ENCODE measurements at regions of chr17 and their contacts with region 1.

Region 1: DNA sequence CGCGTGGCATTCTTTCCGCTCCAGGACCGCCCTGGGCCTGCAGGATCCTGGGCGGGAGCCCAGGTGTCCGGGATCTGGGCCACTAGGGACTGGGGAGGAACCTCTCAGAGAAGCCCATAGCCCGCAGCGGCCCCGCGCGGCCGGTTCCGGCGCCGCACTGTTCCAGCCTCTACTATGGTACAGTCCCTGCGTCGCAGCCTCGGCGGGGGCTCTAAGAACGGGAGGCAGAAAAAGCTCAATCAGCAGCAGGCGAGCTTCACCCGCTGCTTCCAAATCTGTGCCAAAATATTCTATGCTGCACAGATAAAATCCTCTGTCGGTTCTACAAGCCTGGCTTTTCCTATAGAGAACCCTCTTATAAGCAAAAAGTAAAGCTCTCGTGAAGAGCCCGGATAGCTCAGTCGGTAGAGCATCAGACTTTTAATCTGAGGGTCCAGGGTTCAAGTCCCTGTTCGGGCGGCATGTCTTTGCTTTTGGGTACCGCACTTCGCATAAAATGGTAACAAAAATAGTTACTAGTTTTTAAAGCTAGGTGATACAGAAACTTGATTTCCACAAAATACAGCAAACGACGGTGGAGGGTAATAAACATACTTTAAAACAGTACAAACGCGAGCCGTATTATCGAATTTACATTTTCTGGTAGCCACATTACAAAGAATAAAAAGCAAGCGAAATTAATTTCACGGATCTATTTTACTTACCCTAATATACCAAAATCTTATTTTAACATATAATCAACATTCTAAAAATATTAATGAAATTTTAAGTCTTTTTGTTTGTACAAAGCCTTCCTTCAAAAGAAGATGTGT is 661 bp upstream of the ALOXE3 start:
- DNase-seq: peak; percentile 86
- H3K4me3 ChIP-seq: peak overlapping the region; percentile 49 to 88 (median 79)
- H3K27ac ChIP-seq: peak overlapping the region; percentile 10
- H3K4me1 ChIP-seq: peaks cover 31% of the 10 kb centered on the region
- H3K27me3 ChIP-seq: peaks cover 30 to 32% of the 10 kb centered on the region in 2 experiments
- CTCF ChIP-seq: peak; percentile 90 to 93
- POLR2A ChIP-seq: no peak

Region 2: DNA sequence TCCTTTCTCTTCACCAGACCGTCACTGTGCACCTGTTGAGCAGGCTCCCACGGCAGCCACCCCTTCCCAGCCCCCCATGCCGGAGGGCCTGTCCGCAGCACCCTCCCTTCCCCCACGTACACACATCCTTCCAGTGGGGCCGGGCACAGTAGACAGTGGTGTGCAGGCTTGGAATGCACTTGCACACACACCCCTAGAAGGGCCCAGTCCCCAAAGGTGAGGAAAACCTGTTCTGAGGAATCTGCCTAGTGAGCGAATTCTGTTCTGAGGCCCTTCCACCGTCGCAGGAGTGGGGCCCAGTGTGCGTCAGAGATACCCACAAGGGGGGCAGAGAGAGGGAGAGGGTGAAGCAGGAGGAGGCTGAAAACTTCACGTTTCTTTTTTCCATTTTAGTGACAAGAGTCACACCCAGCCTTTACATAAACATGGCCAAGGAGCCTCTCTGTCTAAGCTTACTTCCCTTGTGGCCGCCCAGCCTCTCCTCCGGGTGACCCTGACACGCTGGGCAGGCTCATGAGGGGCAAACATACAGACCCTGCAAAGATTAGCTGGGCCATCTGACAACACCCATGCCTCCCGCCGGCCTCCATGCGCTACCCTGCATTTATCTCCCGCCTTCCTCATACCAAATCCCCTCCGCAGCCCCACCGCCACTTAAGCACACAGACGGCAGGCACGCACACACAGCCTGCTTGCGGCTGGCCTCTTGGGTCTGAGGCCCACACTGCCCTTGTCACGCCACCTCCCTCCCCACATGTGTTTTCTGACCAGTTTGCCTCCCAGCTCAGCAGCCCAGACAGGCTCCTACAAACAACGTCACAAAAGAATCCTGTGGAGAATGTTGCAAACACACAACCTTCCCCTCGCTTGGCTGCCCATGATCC is 641.3 kb before region 1 on chr17:
- CTCF ChIA-PET with region 1: no interaction called
- POLR2A ChIA-PET with region 1: no interaction called
- dilution Hi-C with region 1: no loop called
- intact Hi-C with region 1: no loop called
- DNase-seq: peak; percentile 29
- H3K4me3 ChIP-seq: peak overlapping the region in 2 of 3 experiments; percentile 71 to 91
- H3K27ac ChIP-seq: no peak overlapping the region
- H3K4me1 ChIP-seq: peaks cover 34% of the 10 kb centered on the region
- H3K27me3 ChIP-seq: no peaks in the 10 kb centered on the region
- CTCF ChIP-seq: no peak
- POLR2A ChIP-seq: no peak

Region 3: GRCh38 chr17:7887482-7888183 is 231.3 kb before region 1 on chr17:
- CTCF ChIA-PET with region 1: no interaction called
- POLR2A ChIA-PET with region 1: no interaction called
- dilution Hi-C with region 1: no loop called
- intact Hi-C with region 1: loop called (anchors 1 kb)
- DNase-seq: peak; percentile 100
- H3K4me3 ChIP-seq: peak overlapping the region in 2 of 3 experiments; percentile 50 to 76
- H3K27ac ChIP-seq: peak overlapping the region; percentile 94
- H3K4me1 ChIP-seq: peaks cover 42% of the 10 kb centered on the region
- H3K27me3 ChIP-seq: no peaks in the 10 kb centered on the region
- CTCF ChIP-seq: no peak
- POLR2A ChIP-seq: peak; percentile 74

Region 4: DNA sequence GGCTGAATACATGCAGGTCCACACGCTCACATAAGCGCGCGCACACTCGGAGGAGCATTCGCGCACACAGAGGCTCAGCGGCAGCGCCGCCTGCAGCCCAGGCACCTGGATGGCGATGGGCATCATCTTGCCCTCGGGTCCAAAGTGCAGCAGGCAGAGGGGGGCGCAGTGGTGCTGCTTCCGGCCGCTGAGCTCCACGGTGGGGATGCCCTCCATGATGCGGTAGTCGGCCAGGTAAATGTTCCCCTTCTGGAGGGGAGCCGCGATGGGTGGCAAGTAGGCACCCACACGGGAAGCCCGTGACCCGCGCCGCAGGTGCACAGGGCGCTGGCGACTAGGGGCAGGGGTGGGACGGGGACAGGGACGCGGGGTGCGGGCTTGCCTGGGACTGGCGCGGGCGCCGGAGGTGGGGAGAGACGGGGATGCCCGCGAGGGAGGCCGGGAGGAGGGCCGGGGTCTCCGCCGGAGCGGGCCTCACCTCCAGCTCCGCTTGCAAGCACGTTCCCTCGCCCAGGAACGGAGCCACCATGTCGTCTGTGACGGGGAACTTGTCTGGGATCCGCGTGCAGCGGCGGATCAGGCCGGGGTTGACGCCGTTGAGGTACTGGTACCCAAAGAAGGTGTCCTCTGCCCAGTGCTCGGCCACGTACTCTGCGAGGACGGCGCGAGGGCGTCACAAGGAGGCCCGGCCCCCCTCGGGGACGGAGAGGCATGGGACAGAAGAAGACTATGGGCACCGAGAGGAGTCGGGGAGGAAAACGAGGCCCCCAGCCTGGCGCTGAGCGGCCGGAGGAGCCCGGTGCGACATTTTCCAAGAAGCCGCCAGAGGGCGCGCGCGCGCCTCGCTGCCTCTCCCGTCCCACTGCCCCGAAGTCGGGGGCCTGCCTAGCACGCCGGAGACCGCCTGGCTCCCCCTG is 39.4 kb before region 1 on chr17:
- CTCF ChIA-PET with region 1: interaction called, 51 read pairs
- POLR2A ChIA-PET with region 1: no interaction called
- dilution Hi-C with region 1: no loop called
- intact Hi-C with region 1: loop called (anchors 1 kb)
- DNase-seq: peak; percentile 46
- H3K4me3 ChIP-seq: peak overlapping the region in 2 of 3 experiments; percentile 20 to 32
- H3K27ac ChIP-seq: no peak overlapping the region
- H3K4me1 ChIP-seq: peaks cover 6% of the 10 kb centered on the region
- H3K27me3 ChIP-seq: peaks cover 17 to 23% of the 10 kb centered on the region in 2 experiments
- CTCF ChIP-seq: peak; percentile 83 to 91
- POLR2A ChIP-seq: no peak

Region 5: DNA sequence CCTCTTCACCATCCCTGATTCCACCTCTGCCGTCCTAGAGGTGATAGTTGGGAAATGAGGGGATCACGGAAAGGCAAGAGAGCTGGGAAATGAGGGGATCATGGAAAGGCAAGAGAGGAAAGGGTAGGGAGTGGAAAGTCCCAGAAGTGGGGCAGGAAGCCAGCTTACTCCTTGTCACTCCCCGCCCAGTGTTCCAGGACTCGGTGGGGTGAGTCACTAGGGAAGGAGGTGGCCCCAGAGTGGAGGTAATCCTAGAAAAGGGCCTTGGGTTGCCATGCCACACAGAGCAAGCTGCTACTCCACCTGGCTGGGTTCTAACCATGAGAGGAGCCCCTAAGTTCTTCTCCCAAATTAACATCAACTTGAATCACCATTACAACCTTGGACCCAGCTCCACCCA is 15.4 kb before region 1 on chr17:
- CTCF ChIA-PET with region 1: interaction called, 11 read pairs
- POLR2A ChIA-PET with region 1: no interaction called
- dilution Hi-C with region 1: no loop called
- intact Hi-C with region 1: no loop called
- DNase-seq: no peak
- H3K4me3 ChIP-seq: no peak overlapping the region
- H3K27ac ChIP-seq: no peak overlapping the region
- H3K4me1 ChIP-seq: no peaks in the 10 kb centered on the region
- H3K27me3 ChIP-seq: peaks cover 0 to 6% of the 10 kb centered on the region in 2 experiments
- CTCF ChIP-seq: no peak
- POLR2A ChIP-seq: no peak

Region 6: DNA sequence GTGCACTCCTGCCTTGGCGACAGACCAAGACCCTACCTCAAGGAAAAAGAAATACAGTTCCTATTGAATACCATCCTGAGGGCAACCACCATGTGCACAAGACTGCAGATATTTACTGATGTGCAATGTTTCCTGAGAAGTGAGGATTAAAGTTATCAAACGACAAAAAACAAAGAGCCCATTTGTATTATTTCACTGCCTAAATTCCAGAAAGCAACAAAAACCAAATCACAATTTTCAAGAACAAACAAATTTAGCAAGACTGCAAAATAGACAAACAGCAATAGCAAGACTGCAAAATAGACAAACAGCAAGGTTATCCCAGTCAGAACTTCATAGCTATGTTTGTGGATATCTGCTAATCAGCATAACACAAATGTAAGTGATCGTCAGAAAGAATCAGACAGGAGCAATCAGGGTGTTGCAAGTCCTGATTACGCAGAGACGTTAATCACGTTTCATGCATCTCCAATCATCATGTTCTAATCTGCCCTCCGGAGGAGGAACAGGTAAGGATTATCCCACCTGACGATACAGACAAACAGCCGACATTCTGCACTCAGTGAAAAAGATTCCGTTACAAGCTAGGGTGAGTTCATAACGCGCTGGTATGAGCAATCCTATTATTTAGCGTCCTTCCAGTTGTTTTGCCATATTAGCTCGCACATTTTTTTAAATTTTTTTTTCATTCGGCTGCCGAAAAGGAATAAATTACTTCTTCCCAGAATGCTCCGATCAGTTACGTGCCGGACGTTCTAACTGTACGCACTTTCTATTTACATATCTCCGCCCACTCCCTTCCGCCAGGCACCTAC is 54.3 kb after region 1 on chr17:
- CTCF ChIA-PET with region 1: interaction called, 5 read pairs
- POLR2A ChIA-PET with region 1: interaction called, 16 read pairs
- dilution Hi-C with region 1: no loop called
- intact Hi-C with region 1: no loop called
- DNase-seq: peak; percentile 95
- H3K4me3 ChIP-seq: peak overlapping the region in 2 of 3 experiments; percentile 37 to 68
- H3K27ac ChIP-seq: peak overlapping the region; percentile 95
- H3K4me1 ChIP-seq: peaks cover 23% of the 10 kb centered on the region
- H3K27me3 ChIP-seq: no peaks in the 10 kb centered on the region
- CTCF ChIP-seq: no peak
- POLR2A ChIP-seq: peak; percentile 100

Region 7: DNA sequence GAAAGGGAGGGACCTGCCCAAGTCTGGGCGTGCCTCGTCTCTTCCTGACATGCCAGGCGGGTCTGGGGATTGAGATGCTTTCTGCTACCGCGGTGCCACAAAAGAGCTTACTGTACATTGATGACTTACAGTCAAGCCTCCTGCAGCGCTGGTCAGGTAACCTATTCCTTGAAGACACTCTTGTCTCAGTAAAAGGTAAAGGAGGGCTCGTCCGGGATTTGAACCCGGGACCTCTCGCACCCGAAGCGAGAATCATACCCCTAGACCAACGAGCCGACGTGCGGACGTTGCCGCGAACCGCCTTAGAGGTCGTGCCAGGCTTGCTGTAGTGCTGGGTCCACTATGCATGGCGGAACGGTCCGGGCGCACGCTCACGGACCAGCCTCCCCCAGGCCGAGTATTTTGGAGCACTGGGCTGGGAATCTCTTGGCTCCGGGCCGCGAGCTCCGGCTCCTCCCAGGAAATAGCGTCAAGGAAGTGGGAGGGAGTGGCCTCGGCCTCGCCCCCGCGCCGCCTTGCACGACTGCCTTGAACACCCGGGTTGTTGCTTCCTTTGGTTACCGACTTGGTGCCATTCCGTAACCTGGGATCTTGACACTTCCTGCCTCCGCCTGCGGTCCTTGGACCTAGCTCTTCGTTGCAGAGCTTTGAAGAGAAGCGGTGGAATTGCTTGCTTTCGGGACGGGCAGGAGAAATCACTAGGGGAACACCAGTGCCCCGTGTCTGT is 103.8 kb after region 1 on chr17:
- CTCF ChIA-PET with region 1: interaction called, 6 read pairs
- POLR2A ChIA-PET with region 1: interaction called, 3 read pairs
- dilution Hi-C with region 1: no loop called
- intact Hi-C with region 1: loop called (anchors 1 kb)
- DNase-seq: peak; percentile 95
- H3K4me3 ChIP-seq: peak overlapping the region in 2 of 3 experiments; percentile 41 to 66
- H3K27ac ChIP-seq: peak overlapping the region; percentile 90
- H3K4me1 ChIP-seq: peaks cover 9% of the 10 kb centered on the region
- H3K27me3 ChIP-seq: no peaks in the 10 kb centered on the region
- CTCF ChIP-seq: no peak
- POLR2A ChIP-seq: peak; percentile 65

Region 8: GRCh38 chr17:8237175-8237574 is 118.2 kb after region 1 on chr17:
- CTCF ChIA-PET with region 1: no interaction called
- POLR2A ChIA-PET with region 1: no interaction called
- dilution Hi-C with region 1: no loop called
- intact Hi-C with region 1: no loop called
- DNase-seq: no peak
- H3K4me3 ChIP-seq: no peak overlapping the region
- H3K27ac ChIP-seq: no peak overlapping the region
- H3K4me1 ChIP-seq: no peaks in the 10 kb centered on the region
- H3K27me3 ChIP-seq: no peaks in the 10 kb centered on the region
- CTCF ChIP-seq: no peak
- POLR2A ChIP-seq: no peak

Region 9: DNA sequence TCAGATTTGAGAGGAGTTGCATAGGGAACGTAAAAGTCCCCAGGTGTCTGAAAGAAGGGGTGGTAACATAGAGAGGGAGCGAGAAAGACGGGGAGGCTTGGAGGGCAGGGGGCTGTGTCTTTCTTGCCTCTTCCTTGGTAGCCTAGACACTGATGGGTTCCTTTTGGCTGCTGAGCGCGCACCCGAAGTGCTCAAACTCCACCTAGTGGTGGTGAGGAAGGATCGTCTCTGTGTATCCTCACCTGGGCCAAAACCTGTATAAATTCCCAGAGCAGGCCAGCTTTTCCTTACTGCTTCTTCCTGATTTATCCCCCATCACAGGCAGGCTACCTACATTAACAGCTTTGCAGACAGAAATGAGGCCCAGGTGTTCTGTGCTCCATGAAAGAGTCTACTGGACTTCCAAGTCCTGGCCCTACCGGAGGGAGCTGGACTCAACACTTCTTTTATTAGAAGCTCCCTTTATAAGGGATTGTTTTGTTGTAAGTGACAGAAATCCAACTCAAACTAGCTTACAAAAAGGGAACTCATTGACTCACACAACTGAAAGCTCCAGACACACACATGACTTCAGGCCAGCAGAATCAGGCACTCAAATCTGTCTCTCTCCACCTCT is 181.8 kb after region 1 on chr17:
- CTCF ChIA-PET with region 1: interaction called, 5 read pairs
- POLR2A ChIA-PET with region 1: no interaction called
- dilution Hi-C with region 1: no loop called
- intact Hi-C with region 1: loop called (anchors 2 kb)
- DNase-seq: peak; percentile 58
- H3K4me3 ChIP-seq: no peak overlapping the region
- H3K27ac ChIP-seq: no peak overlapping the region
- H3K4me1 ChIP-seq: no peaks in the 10 kb centered on the region
- H3K27me3 ChIP-seq: no peaks in the 10 kb centered on the region
- CTCF ChIP-seq: peak; percentile 80 to 89
- POLR2A ChIP-seq: no peak

Measured in endothelial cell of umbilical vein (primary cell).